Activated CD4-positive, alpha-beta T cell treated with anti-CD3 and anti-CD28 coated beads for 36 hours (primary cell): ENCODE measurements at regions of chr1 and their contacts with region 1.

Region 1: DNA sequence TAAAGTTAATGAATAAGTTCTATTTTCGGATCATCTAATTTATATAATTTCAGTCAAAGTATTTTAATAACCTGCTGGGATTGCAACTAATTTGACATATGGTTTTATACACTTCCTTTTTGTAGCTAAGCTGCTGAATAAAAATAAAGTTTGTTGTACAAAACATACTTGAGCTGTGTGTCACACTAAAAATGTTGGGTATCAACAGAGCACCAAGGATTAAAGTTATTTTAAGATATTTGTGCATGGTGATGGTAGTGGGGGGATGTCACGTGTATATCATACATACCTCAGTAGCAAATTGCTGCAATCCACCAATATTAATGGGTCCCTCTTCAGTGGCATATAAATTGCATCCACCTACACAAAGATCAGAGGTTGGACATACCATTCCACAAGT is 199.6 kb downstream of the DPYD start:
- DNase-seq: no peak
- ATAC-seq: no peak
- H3K4me3 Mint-ChIP-seq: no peak overlapping the region
- H3K27ac Mint-ChIP-seq: no peak overlapping the region
- H3K4me1 Mint-ChIP-seq: no peaks in the 10 kb centered on the region
- H3K27me3 Mint-ChIP-seq: no peaks in the 10 kb centered on the region

Region 2: DNA sequence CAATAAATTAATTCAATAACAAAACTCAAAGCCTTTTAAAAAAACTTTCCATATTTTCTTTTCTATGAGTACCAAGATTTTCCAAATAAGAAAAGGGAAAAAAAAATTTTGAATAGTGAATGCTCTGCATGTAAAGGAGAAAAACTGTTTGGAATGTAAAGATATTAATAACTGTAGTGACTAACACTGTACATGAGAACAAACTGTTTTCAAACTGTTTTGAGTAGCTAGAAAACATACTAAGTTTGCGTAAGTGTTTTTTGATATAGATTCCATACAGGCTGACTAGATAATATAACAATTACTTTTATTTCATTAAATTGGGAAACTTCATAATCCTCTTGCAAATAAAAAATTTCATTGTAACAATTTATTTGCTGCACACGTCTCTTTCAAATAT is 49.2 kb after region 1 on chr1:
- CTCF ChIA-PET with region 1: no interaction called
- POLR2A ChIA-PET with region 1: no interaction called
- intact Hi-C with region 1: loop called in 1 of 2 experiments (anchors 5 kb)
- DNase-seq: no peak
- ATAC-seq: no peak
- H3K4me3 Mint-ChIP-seq: no peak overlapping the region
- H3K27ac Mint-ChIP-seq: no peak overlapping the region
- H3K4me1 Mint-ChIP-seq: no peaks in the 10 kb centered on the region
- H3K27me3 Mint-ChIP-seq: no peaks in the 10 kb centered on the region

Region 3: DNA sequence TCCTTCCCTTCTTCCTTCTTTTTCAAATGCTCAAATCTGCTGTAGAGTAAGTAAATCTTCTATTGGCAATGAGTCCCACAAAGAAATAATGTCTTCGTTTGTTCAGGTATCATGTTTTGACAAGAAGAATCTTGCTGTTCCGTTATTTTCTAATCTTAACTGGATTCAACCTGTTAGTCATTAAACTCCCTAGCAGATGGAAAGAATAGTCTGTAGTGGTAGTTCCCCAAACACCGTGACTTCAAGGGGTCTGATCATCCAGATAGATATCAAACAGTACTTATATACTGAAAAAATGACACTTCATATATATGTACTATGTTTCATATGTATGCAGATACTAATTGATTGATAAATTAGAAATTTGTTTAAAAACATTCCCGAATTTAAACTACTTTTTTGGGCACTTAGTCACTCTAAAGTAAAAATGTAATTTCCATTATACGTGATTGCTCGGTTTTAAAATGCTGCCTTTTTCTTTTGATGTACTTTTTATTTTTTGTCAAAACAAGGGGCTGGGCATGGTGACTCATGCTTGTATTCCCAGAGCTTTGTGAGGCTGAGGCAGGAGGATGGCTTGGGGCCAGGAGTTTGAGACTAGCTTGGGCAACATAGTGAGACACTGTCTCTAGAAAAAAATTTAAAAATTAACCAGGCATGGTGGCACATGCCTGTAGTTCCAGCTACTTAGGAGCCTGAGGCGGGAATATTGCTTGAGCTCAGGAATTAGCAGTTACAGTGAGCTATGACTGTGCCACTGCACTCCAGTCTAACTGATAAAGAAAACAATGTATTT is 604.6 kb after region 1 on chr1:
- CTCF ChIA-PET with region 1: no interaction called
- POLR2A ChIA-PET with region 1: no interaction called
- intact Hi-C with region 1: no loop called
- DNase-seq: no peak
- ATAC-seq: no peak
- H3K4me3 Mint-ChIP-seq: no peak overlapping the region
- H3K27ac Mint-ChIP-seq: no peak overlapping the region
- H3K4me1 Mint-ChIP-seq: peaks cover 12% of the 10 kb centered on the region
- H3K27me3 Mint-ChIP-seq: no peaks in the 10 kb centered on the region